Posterior cingulate gyrus (tissue), 11 donors: ENCODE measurements at regions of chr11 and their contacts with region 1.

Region 1: DNA sequence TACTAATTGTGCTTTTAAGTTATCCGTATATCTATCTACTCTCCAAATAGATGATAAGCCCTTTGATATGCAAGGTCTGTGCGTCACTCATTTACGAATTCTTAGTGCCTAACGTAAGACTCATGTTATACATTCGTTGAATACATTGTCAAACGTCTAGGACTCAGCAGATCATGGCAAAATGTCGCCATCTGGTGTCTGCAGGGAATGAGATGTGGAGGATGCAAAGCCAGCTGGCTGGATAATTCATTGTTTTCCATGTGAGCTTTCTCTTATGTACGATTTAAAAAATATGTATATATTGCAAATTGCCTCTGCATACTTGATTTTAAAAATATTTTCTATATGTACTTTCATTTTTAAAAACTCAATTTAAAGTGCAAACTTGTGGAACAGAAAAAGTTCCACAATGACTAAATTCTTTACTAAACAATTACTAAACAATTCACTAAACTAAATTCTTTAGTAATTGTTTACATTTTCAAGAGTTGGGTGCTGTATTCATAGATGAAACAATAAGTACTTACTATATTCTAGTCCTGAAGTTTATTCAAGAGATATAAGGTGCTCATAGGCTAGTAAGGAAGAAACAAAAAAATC is 33.8 kb downstream of the ZNF202 start:
- DNase-seq: peak in 9 of 10 donors; percentile 26 to 92 (median 62)

Region 2: DNA sequence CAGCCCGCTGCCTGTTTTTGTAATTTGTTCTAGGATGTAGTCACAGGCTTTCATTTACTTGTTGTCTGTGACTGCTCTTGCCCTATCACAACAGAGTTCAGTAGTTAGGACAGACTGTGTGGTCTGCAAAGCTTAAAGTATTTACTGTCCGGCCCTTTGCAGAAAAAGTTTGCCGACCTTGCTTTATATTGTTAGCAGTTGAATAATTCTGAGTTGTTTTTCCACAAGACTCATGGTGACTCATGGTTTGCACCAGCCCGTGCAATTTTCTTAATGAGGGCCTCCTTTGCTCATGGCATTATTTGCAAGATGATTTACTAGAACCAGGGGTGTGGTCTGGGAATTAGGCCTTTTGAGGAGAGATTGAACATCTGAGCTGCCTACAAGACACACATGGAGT is 163.9 kb before region 1 on chr11:
- intact Hi-C with region 1: no loop called
- DNase-seq: no peak

Region 3: DNA sequence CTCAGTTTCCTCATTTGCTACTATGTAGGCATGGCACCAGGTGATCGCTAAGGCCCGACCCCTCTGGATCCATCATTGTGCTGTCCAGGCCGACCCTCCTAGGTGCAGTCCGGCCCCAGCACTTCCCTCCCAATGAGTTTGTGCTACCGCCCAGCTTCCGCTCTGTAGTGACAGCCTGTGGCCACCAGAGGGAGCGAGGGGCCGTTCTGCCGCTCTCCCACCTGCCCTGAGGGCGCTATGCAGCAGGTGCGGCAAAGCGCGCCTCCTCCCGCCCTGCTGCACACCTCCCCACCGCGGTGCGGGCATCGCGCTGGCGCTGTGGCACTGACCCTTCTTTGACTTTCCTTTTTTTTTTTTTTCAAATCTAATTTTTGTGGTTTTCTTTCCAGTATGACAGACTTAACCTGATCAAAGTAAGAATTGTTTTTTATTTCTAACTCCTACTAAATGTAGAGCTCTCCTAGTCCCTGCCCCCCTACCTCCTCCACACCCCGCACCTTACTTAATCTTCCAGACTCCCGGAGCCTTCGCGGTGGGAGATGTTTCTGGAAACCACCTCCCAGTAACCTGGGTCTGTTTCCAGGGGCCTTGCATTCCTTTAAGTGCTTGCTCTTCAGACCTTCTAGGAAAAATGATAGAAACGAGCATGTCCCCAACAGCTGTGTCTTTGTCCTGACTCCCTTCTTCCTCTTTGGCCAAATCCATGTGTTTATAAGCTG is 127.0 kb before region 1 on chr11:
- intact Hi-C with region 1: loop called (anchors 5 kb)
- DNase-seq: peak in 9 of 10 donors; percentile 49 to 95 (median 66)

Region 4: GRCh38 chr11:123640677-123641494 is 66.8 kb before region 1 on chr11:
- intact Hi-C with region 1: loop called (anchors 2 kb)
- DNase-seq: peak; percentile 34 to 93 (median 62)